Calu3 (cell line): ENCODE measurements at regions of chr12 and their contacts with region 1.

Region 1: GRCh38 chr12:95717974-95718431 is 72.6 kb downstream of the NTN4 start:
- DNase-seq: peak; percentile 34
- H3K4me3 Mint-ChIP-seq: peak overlapping the region; percentile 5
- H3K27ac Mint-ChIP-seq: peak overlapping the region; percentile 63
- H3K4me1 Mint-ChIP-seq: peaks cover 64% of the 10 kb centered on the region
- H3K27me3 Mint-ChIP-seq: no peaks in the 10 kb centered on the region
- CTCF ChIP-seq: no peak

Region 2: DNA sequence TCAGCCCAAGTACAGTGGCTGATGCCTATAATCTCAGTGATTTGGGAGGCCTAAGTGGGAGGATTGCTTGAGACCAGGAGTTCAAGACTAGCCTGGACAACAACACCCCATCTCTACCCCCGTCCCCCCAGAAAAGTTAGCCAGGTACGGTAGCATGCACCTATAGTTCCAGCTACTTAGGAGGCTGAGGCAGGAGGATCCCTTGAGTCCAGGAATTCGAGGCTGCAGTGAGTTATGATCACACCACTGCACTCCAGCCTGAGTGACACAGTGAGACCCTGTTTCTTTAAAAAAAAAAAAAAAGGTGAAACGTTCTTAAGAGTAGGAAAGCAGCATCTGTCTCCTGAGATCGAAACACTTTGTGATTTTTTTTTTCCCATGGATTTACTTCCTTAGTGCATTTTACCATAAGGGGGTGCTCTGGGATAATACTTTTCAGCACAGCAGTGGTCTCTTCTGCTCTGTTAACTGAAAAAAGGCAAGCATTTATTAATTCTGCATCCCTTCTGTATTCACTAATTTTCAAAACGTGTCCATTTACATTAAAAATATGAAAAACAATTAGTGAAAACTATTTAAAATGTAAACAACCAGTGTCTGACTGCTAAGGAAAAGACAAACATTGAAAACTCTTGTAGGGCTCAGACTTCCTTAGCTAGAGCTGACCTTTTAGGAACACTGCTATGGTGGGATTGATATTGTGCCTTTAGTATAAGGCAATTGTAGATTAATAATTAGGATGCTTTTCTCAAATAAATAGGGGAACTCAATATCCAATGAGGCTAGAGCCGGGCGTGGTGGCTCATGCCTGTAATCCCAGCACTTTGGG is 135.6 kb before region 1 on chr12:
- CTCF ChIA-PET with region 1: no interaction called
- intact Hi-C with region 1: loop called (anchors 5 kb)
- DNase-seq: peak; percentile 24
- H3K4me3 Mint-ChIP-seq: no peak overlapping the region
- H3K27ac Mint-ChIP-seq: no peak overlapping the region
- H3K4me1 Mint-ChIP-seq: peaks cover 12% of the 10 kb centered on the region
- H3K27me3 Mint-ChIP-seq: no peaks in the 10 kb centered on the region
- CTCF ChIP-seq: peak; percentile 34

Region 3: DNA sequence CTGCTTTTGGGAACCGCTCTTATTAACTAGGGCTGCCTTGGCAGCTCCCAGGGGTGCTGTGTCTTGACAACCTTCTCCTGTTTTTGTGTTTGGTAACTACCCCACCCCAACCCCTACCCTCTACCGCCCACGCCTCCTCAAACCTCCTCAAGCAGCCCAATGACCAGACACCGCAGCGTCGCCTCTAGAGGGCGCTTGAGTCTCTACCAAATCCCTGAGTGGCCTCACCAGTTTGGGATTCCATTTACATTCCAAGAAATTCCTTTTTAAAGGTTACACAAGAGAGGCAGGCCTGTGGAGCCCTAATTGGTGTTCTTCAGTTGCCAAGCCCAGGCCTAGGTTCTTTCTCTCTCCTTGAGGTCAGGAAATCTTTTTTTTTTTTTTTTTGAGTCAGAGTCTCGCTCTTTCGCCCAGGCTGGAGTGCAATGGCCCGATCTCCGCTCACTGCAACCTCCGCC is 94.4 kb before region 1 on chr12:
- CTCF ChIA-PET with region 1: no interaction called
- intact Hi-C with region 1: loop called (anchors 5 kb)
- DNase-seq: peak; percentile 78
- H3K4me3 Mint-ChIP-seq: no peak overlapping the region
- H3K27ac Mint-ChIP-seq: peak overlapping the region; percentile 96
- H3K4me1 Mint-ChIP-seq: peaks cover 40% of the 10 kb centered on the region
- H3K27me3 Mint-ChIP-seq: no peaks in the 10 kb centered on the region
- CTCF ChIP-seq: peak; percentile 50

Region 4: DNA sequence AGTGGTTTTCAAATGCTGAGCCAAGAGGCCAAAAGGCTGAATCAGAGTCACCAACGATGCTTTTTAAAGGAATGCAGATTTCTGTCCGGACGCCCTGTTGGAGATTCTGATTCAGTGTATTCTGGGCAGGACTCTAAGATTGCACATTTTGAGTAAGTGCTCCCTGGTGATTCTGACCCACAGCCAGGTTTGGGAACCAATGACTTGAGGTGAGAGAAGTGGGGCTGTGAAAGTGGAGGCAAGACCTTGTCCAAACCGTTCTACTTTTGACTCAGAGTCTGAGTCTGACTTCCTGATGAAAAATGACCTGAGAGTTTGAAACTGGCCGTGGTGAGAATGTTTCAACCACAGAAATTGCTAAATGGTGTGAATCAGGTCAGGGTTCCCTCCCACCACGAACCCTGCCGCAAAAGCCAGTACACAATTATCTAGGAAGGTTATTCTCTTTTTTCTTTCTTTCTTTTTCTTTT is 17.7 kb before region 1 on chr12:
- CTCF ChIA-PET with region 1: interaction called, 10 read pairs
- intact Hi-C with region 1: no loop called
- DNase-seq: no peak
- H3K4me3 Mint-ChIP-seq: no peak overlapping the region
- H3K27ac Mint-ChIP-seq: peak overlapping the region; percentile 77
- H3K4me1 Mint-ChIP-seq: peaks cover 27% of the 10 kb centered on the region
- H3K27me3 Mint-ChIP-seq: no peaks in the 10 kb centered on the region
- CTCF ChIP-seq: no peak

Region 5: DNA sequence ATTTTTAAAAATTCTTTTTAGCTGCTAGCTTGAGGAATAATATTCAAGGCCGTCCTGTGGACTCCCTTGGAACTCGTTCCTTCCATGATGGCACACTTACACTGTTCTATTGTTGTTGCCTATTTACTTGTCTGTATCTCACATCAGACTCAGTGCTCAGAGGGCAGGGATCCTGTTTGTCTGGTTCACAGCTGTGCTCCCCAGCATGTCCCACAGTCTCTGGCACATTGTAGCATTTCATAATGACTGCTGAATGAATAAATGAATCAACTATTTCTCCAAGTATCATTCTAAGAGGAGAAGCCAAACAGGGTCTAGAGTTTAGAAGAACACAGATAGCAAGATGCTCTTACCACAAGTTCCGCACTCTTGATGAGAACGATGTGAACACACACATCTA is 24.6 kb after region 1 on chr12:
- CTCF ChIA-PET with region 1: no interaction called
- intact Hi-C with region 1: loop called (anchors 2 kb)
- DNase-seq: peak; percentile 34
- H3K4me3 Mint-ChIP-seq: no peak overlapping the region
- H3K27ac Mint-ChIP-seq: peak overlapping the region; percentile 87
- H3K4me1 Mint-ChIP-seq: peaks cover 58% of the 10 kb centered on the region
- H3K27me3 Mint-ChIP-seq: no peaks in the 10 kb centered on the region
- CTCF ChIP-seq: no peak

Region 6: GRCh38 chr12:95796225-95796981 is 78.4 kb after region 1 on chr12:
- CTCF ChIA-PET with region 1: interaction called, 3 read pairs
- intact Hi-C with region 1: loop called (anchors 5 kb)
- DNase-seq: peak; percentile 48
- H3K4me3 Mint-ChIP-seq: peak overlapping the region; percentile 13
- H3K27ac Mint-ChIP-seq: peak overlapping the region; percentile 82
- H3K4me1 Mint-ChIP-seq: peaks cover 70% of the 10 kb centered on the region
- H3K27me3 Mint-ChIP-seq: no peaks in the 10 kb centered on the region
- CTCF ChIP-seq: no peak